MCF 10A (cell line): ENCODE measurements at regions of chr1 and their contacts with region 1.

Region 1: GRCh38 chr1:47192458-47193384 is 2.9 kb upstream of the PDZK1IP1 start:
- DNase-seq: peak; percentile 81
- H3K4me3 Mint-ChIP-seq: peak overlapping the region; percentile 58
- H3K27ac Mint-ChIP-seq: peak overlapping the region; percentile 62
- H3K4me1 Mint-ChIP-seq: peaks cover 33% of the 10 kb centered on the region
- H3K27me3 Mint-ChIP-seq: no peaks in the 10 kb centered on the region
- CTCF ChIP-seq: peak; percentile 92

Region 2: GRCh38 chr1:47211796-47212269 is 19.1 kb after region 1 on chr1:
- CTCF ChIA-PET with region 1: interaction called, 26 read pairs
- POLR2A ChIA-PET with region 1: no interaction called
- intact Hi-C with region 1: no loop called
- DNase-seq: no peak
- H3K4me3 Mint-ChIP-seq: no peak overlapping the region
- H3K27ac Mint-ChIP-seq: no peak overlapping the region
- H3K4me1 Mint-ChIP-seq: no peaks in the 10 kb centered on the region
- H3K27me3 Mint-ChIP-seq: no peaks in the 10 kb centered on the region
- CTCF ChIP-seq: no peak

Region 3: DNA sequence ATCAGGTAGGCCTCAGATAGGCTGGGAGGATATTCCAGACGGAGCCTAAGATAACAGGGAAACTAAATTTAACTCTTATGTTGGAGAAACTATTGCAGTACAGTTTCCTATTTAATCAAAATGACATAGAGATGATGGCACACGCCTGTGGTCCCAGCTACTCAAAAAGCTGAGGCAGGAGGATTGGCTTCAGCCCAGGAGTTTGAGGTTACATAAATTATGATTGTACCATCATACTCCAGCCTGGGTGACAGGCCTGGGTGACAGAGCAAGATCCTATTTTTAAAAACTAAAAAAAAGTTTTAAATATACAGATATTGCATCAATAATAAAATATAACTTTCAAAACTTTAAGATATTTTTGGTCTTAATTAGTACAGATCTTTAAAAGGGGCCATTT is 64.5 kb after region 1 on chr1:
- CTCF ChIA-PET with region 1: interaction called, 212 read pairs
- POLR2A ChIA-PET with region 1: interaction called, 23 read pairs
- intact Hi-C with region 1: loop called (anchors 1 kb)
- DNase-seq: no peak
- H3K4me3 Mint-ChIP-seq: no peak overlapping the region
- H3K27ac Mint-ChIP-seq: no peak overlapping the region
- H3K4me1 Mint-ChIP-seq: no peaks in the 10 kb centered on the region
- H3K27me3 Mint-ChIP-seq: no peaks in the 10 kb centered on the region
- CTCF ChIP-seq: no peak

Region 4: DNA sequence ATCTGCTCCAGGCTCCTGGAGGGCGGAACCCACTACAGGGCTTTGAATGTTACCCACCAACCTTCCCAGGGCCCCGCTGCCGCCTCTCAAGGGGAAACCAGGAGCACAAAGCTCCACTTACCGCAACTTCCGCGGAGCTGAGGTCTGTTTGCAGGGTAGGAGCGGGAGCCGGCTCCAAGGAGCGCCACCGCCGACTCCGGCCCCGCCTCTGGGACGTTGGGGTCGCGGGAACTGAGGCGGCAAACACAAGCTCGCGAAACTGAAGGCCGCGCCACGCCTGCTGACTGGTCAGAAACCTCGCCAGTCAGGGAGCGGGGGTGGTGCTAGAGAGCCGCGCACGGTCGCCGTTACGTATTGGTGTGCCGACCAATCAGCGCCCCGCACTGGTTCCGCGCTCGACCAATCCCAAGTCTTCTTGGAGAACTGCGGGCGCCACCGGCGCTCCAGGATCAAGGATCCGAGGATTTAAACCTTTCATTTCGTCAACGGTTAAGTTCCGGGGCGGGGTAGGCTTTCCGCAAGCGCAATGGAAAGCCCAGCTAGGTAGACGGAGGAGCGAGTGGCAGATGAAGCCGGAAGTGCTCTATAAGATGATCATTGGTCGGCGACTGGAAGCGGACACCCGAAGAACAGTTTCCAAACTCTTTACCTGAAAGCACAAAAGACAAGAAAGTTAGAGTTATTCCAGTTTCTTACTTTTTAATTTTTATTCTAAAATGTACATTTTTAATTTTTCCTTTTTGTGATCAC is 121.4 kb after region 1 on chr1 and contains the start of gene STIL:
- CTCF ChIA-PET with region 1: interaction called, 9 read pairs
- POLR2A ChIA-PET with region 1: interaction called, 15 read pairs
- intact Hi-C with region 1: loop called (anchors 1 kb)
- DNase-seq: peak; percentile 99
- H3K4me3 Mint-ChIP-seq: peak within 1 kb of the TSS; percentile 91
- H3K27ac Mint-ChIP-seq: peak within 1 kb of the TSS; percentile 94
- H3K4me1 Mint-ChIP-seq: peaks cover 5% of the 10 kb centered on the region
- H3K27me3 Mint-ChIP-seq: no peaks in the 10 kb centered on the region
- CTCF ChIP-seq: no peak
- total RNA-seq, gene STIL: 8.8 and 12.6 TPM in 2 replicates

Region 5: GRCh38 chr1:47333922-47334764 is 141.4 kb after region 1 on chr1:
- CTCF ChIA-PET with region 1: interaction called, 36 read pairs
- POLR2A ChIA-PET with region 1: interaction called, 29 read pairs
- intact Hi-C with region 1: loop called (anchors 5 kb)
- DNase-seq: peak; percentile 73
- H3K4me3 Mint-ChIP-seq: no peak overlapping the region
- H3K27ac Mint-ChIP-seq: no peak overlapping the region
- H3K4me1 Mint-ChIP-seq: peaks cover 6% of the 10 kb centered on the region
- H3K27me3 Mint-ChIP-seq: no peaks in the 10 kb centered on the region
- CTCF ChIP-seq: peak; percentile 19

Region 6: DNA sequence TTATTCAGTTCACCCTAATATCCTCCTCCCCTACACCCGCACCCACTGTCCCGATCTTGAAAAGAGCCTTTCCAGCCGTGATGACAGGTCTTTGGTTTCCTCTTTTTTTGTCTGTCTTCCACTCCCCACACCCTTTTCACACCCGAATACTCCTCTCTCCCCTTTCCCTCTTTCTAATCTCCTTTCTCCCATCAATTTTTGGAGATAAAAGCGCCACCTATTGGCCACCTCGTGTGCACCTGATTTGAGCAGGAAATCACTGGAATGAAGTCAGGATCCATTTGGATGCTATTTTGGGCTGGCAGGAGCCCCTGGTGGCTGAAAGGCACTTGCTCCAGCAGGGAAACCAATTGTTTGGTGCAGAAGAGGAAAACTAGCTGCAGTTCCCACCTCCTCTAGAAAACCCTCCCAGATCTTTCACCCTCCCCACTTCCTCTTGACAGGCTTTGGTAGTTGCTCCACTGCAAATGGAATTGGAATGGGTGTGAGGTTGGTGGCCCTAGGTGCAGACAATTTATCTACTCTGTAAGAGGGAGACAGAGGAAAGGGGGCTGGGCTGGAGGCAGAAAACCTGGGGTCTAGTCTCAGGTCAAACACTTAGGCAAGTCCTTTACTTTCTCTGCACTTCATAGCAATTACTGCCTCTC is 231.7 kb after region 1 on chr1:
- CTCF ChIA-PET with region 1: interaction called, 12 read pairs
- POLR2A ChIA-PET with region 1: interaction called, 3 read pairs
- intact Hi-C with region 1: loop called (anchors 5 kb)
- DNase-seq: peak; percentile 81
- H3K4me3 Mint-ChIP-seq: no peak overlapping the region
- H3K27ac Mint-ChIP-seq: no peak overlapping the region
- H3K4me1 Mint-ChIP-seq: peaks cover 11% of the 10 kb centered on the region
- H3K27me3 Mint-ChIP-seq: no peaks in the 10 kb centered on the region
- CTCF ChIP-seq: peak; percentile 68

Region 7: GRCh38 chr1:47725992-47726855 is 533.5 kb after region 1 on chr1:
- CTCF ChIA-PET with region 1: interaction called, 22 read pairs
- POLR2A ChIA-PET with region 1: no interaction called
- intact Hi-C with region 1: no loop called
- DNase-seq: peak; percentile 76
- H3K4me3 Mint-ChIP-seq: peak overlapping the region; percentile 22
- H3K27ac Mint-ChIP-seq: no peak overlapping the region
- H3K4me1 Mint-ChIP-seq: peaks cover 9% of the 10 kb centered on the region
- H3K27me3 Mint-ChIP-seq: no peaks in the 10 kb centered on the region
- CTCF ChIP-seq: peak; percentile 75